ENCODE measurements at regions of chr2 and their contacts with region 1.

Region 1: GRCh38 chr2:191165176-191165643 is 14.4 kb upstream of the STAT4 start:
- DNase-seq: no peak
- H3K4me3 ChIP-seq: no peak overlapping the region
- H3K27ac ChIP-seq: no peak overlapping the region
- H3K4me1 ChIP-seq: peaks cover 1% of the 10 kb centered on the region
- H3K27me3 ChIP-seq: no peaks in the 10 kb centered on the region
- CTCF ChIP-seq: peak; percentile 19 to 38 (median 37)
- EP300 ChIP-seq: no peak
- POLR2A ChIP-seq: no peak

Region 2: DNA sequence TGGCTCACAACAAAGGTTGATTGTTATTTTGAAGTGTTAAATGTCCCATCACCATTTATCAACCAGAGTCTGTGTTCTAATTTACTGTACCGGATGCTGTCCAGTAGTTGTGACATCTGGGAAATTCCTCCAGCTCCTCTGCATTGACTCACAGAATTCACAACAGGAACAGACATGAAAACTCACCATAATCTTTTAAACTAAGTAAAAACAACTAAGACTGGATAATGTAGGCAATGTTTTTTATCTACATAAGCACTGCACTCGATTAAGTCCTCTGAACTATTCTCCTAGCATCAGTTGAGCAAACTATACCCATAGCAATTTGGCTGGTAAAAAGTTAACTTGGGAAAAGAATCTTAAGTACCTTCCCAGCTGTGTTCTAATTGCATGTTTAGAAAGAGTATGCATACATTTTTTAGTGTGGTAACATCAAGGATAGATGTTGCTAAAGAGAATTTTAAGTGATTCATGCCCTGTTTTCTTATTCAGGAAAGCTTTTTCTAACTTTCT is 37.1 kb after region 1 on chr2:
- intact Hi-C with region 1: no loop called
- DNase-seq: no peak
- H3K4me3 ChIP-seq: no peak overlapping the region
- H3K27ac ChIP-seq: no peak overlapping the region
- H3K4me1 ChIP-seq: no peaks in the 10 kb centered on the region
- H3K27me3 ChIP-seq: no peaks in the 10 kb centered on the region
- CTCF ChIP-seq: no peak
- EP300 ChIP-seq: no peak
- POLR2A ChIP-seq: no peak

Region 3: DNA sequence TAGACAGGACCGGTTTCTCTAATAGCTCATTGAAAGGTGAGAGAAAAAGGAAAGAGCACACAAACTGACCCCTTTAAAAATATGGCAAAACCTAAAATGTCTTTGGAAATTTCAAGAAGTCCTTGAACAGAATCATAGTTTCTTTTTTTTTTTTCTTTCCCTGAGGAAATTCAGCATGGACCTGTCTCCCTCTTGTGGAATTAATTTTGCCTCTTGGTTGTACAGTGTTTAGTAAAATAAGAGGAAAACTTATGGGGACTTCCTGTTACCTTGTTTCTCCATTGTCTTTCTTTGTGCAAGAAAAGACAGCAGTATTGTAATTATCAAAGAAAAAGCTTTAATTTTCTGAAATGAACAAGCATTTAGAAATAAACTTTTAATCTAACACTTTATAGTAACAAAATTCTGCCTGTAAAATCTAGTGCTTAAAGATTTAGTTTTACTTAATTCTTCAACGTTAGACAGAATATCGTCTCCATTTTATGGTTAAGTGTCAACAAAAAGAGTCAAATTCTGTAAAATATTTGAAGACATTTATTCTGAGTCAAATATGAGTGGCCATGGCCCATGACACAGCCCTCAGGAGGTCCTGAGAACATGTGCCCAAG is 336.5 kb after region 1 on chr2:
- intact Hi-C with region 1: loop called (anchors 5 to 10 kb)
- DNase-seq: no peak
- H3K4me3 ChIP-seq: no peak overlapping the region
- H3K27ac ChIP-seq: no peak overlapping the region
- H3K4me1 ChIP-seq: peaks cover 2% of the 10 kb centered on the region
- H3K27me3 ChIP-seq: no peaks in the 10 kb centered on the region
- CTCF ChIP-seq: peak; percentile 35 to 55 (median 37)
- EP300 ChIP-seq: no peak
- POLR2A ChIP-seq: no peak

Region 4: DNA sequence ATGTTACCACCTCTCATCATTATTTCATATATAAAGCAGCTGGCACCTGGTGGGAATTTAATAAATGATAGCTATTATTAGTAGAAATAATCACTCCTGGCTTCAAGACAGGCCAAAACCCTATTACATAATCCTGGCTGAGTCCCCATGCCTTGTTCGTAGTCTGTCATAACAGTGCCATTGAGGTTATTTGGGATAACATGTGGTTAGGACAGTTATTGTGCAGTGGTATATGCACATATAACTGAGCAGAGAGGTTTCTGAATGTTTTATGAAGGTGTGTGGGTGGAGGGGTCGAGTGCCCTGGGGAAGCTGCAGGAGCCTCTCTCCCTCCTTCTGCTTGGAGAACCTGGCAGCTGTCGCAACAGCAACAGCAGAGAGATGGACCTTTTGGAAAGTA is 350.3 kb after region 1 on chr2:
- intact Hi-C with region 1: loop called in 2 of 4 experiments (anchors 5 kb)
- DNase-seq: no peak
- H3K4me3 ChIP-seq: no peak overlapping the region
- H3K27ac ChIP-seq: no peak overlapping the region
- H3K4me1 ChIP-seq: no peaks in the 10 kb centered on the region
- H3K27me3 ChIP-seq: no peaks in the 10 kb centered on the region
- CTCF ChIP-seq: no peak
- EP300 ChIP-seq: no peak
- POLR2A ChIP-seq: no peak

Region 5: DNA sequence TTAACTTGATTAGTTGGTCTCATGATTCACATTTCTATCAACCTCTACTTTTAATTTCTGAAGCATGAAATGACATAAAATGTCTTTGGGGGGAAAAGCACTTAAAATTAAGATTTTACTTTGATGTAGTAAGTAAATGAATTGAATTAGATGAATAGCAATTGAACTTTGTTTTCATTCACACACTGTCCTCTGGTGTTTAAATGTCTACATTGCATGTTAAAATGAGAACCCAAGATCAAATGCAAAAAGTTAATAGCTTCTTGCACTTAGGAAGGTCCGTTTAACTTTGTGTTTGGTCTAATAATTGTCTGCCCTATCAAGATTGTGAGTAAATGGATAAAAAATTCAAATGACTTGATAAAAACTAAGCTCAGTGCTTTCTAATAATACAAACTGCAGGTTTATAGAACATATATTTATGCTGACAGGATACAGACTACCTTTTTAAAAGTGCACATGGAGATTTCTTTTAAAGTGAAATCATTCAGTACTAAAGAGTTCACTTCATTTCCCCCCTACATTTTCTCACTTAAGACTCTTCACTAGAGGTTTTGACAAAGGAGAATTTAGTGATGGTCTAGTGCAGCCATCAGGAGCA is 356.5 kb after region 1 on chr2:
- intact Hi-C with region 1: loop called in 2 of 4 experiments (anchors 5 kb)
- DNase-seq: no peak
- H3K4me3 ChIP-seq: no peak overlapping the region
- H3K27ac ChIP-seq: no peak overlapping the region
- H3K4me1 ChIP-seq: no peaks in the 10 kb centered on the region
- H3K27me3 ChIP-seq: no peaks in the 10 kb centered on the region
- CTCF ChIP-seq: peak; percentile 38 to 75 (median 51)
- EP300 ChIP-seq: no peak
- POLR2A ChIP-seq: no peak

Measured in ovary (tissue), 10 donors.